Activated CD8-positive, alpha-beta memory T cell treated with anti-CD3 and anti-CD28 coated beads, Interleukin-2, amount 10 ng/mL, durations not matched to agents 7 days and 5 days (primary cell): ENCODE measurements at regions of chr3 and their contacts with region 1.

Region 1: GRCh38 chr3:16511681-16512434 is 1.6 kb downstream of the RFTN1 start:
- DNase-seq: peak; percentile 94
- ATAC-seq: peak; percentile 66
- H3K4me3 Mint-ChIP-seq: peak overlapping the region; percentile 100
- H3K27ac Mint-ChIP-seq: peak overlapping the region; percentile 86
- H3K4me1 Mint-ChIP-seq: peaks cover 79% of the 10 kb centered on the region
- H3K27me3 Mint-ChIP-seq: no peaks in the 10 kb centered on the region

Region 2: DNA sequence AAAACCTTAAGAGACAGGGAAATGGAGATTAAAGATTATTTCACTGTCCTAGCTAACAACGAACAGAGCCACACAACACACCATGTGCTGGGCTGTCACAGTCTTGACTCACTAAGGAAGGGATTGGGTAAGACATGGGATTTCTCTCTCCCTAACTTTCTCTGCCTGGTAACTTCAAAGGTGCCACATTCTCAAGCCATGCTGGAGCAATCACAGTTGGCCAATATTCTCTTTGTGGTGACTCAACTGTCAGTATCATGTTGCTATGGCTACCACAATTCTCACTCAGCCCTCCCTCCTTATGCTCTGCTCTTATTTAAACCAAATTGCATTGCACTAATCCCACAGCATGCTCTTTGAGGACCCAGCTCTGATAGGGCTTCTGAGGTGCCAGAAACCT is 172.9 kb before region 1 on chr3:
- CTCF ChIA-PET with region 1: interaction called, 12 read pairs
- DNase-seq: peak; percentile 48
- ATAC-seq: peak; percentile 35
- H3K4me3 Mint-ChIP-seq: no peak overlapping the region
- H3K27ac Mint-ChIP-seq: peak overlapping the region; percentile 74
- H3K4me1 Mint-ChIP-seq: peaks cover 49% of the 10 kb centered on the region
- H3K27me3 Mint-ChIP-seq: no peaks in the 10 kb centered on the region

Region 3: DNA sequence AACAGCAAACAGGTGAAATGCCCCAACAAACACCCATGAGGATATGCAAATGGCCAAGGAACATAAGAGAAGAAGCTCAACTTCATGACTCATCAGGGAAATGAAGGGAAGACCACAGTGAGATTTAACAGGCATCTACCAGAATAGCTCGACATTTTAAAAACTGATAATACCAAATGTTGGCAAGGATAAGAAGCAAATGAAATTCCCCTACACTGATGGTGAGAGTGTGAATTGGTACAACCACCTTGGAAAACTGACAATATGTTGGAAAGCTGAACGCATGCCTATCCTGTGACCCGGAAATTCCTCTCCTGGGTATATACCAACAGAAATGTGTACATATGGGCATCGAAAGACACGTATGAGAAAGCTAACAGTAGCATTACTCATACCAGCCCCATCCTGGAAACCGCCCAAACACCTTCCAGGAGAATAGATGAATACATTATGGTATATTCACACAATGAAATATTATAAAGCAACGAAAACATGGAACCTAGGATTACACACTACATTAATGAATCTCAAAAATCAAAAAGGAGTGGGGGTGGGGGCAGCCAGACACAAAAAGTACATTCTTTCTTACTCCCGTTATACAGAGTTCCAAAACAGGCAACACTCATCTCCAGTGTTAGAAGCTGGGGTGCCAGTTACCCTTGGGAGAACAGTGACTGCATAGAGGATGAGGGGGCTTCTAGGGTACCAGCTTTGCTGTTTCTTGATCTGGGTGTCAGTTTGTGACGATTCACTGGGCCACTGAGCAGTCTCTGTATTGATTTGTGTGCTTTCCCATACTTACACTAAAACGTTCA is 15.2 kb before region 1 on chr3:
- CTCF ChIA-PET with region 1: interaction called, 10 read pairs
- DNase-seq: no peak
- ATAC-seq: peak; percentile 57
- H3K4me3 Mint-ChIP-seq: no peak overlapping the region
- H3K27ac Mint-ChIP-seq: peak overlapping the region; percentile 10
- H3K4me1 Mint-ChIP-seq: peaks cover 53% of the 10 kb centered on the region
- H3K27me3 Mint-ChIP-seq: no peaks in the 10 kb centered on the region